ENCODE measurements at regions of chr21 and their contacts with region 1.

Region 1: DNA sequence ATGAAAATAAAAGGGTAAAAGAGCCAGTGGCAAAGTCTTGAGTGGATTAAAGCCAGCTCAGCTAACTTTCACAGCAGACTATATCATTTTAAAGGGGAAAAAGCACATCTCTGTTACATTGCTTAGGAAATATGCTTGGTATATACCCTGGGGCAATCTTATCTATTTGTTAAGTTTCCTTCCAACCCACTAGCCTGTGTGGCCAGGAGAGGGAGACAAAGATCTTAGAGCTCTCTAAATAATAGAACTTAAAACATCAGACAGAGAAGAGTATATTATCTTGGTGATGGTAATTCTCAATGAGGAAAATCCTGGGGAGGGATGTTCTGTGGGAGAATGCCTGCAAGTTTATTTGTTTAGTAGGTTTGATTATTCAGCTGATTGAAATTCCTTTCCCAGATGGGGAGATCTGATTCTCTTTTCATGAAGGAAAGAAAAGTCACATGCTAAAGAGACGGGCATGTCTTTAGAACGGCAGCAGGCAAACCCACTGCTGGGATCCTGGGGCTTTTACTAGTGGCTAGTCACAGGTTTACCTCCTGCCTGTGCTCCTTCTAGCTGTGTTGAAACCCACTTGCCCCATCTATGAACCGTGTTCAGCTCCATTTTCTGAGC is 3.6 kb downstream of the KCNE2 start:
- DNase-seq: peak; percentile 83
- H3K4me3 Mint-ChIP-seq: no peak overlapping the region
- H3K27ac Mint-ChIP-seq: no peak overlapping the region
- H3K4me1 Mint-ChIP-seq: no peaks in the 10 kb centered on the region
- H3K27me3 Mint-ChIP-seq: peaks cover 11% of the 10 kb centered on the region
- CTCF ChIP-seq: peak; percentile 59

Region 2: GRCh38 chr21:32994305-32994704 is 1373.1 kb before region 1 on chr21:
- CTCF ChIA-PET with region 1: no interaction called
- POLR2A ChIA-PET with region 1: no interaction called
- intact Hi-C with region 1: no loop called
- DNase-seq: peak; percentile 40
- H3K4me3 Mint-ChIP-seq: no peak overlapping the region
- H3K27ac Mint-ChIP-seq: no peak overlapping the region
- H3K4me1 Mint-ChIP-seq: peaks cover 7% of the 10 kb centered on the region
- H3K27me3 Mint-ChIP-seq: peaks cover 64% of the 10 kb centered on the region
- CTCF ChIP-seq: peak; percentile 56

Region 3: DNA sequence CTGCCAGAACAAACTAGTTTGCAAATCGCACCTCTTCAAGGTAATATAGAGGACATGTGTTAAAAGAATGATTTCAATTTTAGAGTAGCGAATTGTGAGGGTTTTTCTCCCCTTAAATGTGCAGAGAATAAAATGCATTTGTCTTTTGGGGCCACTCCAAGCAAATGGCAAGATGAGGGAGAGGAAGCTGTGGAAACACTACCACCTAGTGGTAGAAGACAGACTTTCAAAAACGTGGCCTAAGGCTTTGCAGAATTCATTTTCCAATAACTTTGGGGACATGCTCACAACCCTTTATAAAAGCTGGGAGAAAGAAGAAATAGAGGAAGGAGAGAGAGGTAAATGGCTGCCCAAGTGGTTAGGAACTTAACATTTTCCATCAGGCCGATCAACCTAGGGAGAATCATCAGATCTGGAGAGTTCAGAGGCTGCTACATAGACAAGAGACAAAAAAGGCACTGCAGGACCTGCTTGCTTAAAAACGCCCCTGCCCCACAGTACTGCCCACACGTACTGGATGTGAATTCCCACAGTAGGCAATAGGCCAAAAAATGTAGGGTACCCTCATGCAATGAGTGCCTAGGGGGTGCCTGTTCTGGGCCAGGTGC is 263.2 kb after region 1 on chr21:
- CTCF ChIA-PET with region 1: interaction called, 25 read pairs
- POLR2A ChIA-PET with region 1: no interaction called
- intact Hi-C with region 1: loop called (anchors 1 kb)
- DNase-seq: peak; percentile 70
- H3K4me3 Mint-ChIP-seq: no peak overlapping the region
- H3K27ac Mint-ChIP-seq: no peak overlapping the region
- H3K4me1 Mint-ChIP-seq: no peaks in the 10 kb centered on the region
- H3K27me3 Mint-ChIP-seq: peaks cover 49% of the 10 kb centered on the region
- CTCF ChIP-seq: peak; percentile 79